ENCODE measurements at regions of chr1 and their contacts with region 1.

Region 1: GRCh38 chr1:42888013-42888633 is 41.7 kb downstream of the ZNF691 start:
- DNase-seq: no peak
- H3K4me3 ChIP-seq: no peak overlapping the region
- H3K27ac ChIP-seq: no peak overlapping the region
- H3K4me1 ChIP-seq: no peaks in the 10 kb centered on the region
- H3K27me3 ChIP-seq: peaks cover 0 to 8% of the 10 kb centered on the region in 2 donors
- CTCF ChIP-seq: no peak

Region 2: GRCh38 chr1:43047135-43047534 is 159.0 kb after region 1 on chr1:
- intact Hi-C with region 1: loop called (anchors 1 kb)
- DNase-seq: no peak
- H3K4me3 ChIP-seq: no peak overlapping the region
- H3K27ac ChIP-seq: no peak overlapping the region
- H3K4me1 ChIP-seq: no peaks in the 10 kb centered on the region
- H3K27me3 ChIP-seq: peaks cover 0 to 6% of the 10 kb centered on the region in 2 donors
- CTCF ChIP-seq: no peak

Measured in tibial artery (tissue), 4 donors.